ENCODE measurements at regions of chr15 and their contacts with region 1.

Region 1: DNA sequence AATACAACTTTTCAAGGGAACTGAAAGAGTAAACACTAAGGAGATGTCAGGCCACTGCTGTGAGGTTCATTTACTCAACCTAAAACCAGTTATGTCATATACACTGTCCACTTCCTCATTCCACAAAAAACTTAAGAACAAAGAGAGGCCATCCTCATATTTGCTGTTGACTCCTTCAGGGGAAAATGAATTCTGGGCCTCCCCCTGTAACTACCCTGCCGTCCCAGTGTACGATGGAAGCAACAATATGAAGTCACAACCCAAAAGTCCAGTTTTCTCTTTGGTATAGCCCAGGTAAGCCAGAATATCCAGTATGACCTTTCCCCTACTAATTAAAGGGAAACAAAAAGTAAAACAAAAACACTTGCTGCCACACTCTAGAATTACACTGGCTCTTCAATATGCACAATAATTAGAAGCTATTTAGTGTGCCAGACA is 16.2 kb downstream of the CEP152 start:
- DNase-seq: no peak
- ATAC-seq: peak in 3 of 4 donors; percentile 52 to 60 (median 58)
- H3K4me3 ChIP-seq: peak overlapping the region in 3 of 12 donors; percentile 2 to 26 (median 7)
- H3K27ac ChIP-seq: peak overlapping the region in 3 of 12 donors; percentile 6 to 88 (median 16)
- H3K4me1 ChIP-seq: peaks cover 0 to 20% (median 0%) of the 10 kb centered on the region in 12 donors
- H3K27me3 ChIP-seq: no peaks in the 10 kb centered on the region
- CTCF ChIP-seq: no peak
- POLR2A ChIP-seq: no peak

Region 2: GRCh38 chr15:48345516-48345915 is 449.2 kb before region 1 on chr15:
- intact Hi-C with region 1: no loop called
- DNase-seq: no peak
- ATAC-seq: no peak
- H3K4me3 ChIP-seq: no peak overlapping the region
- H3K27ac ChIP-seq: no peak overlapping the region
- H3K4me1 ChIP-seq: no peaks in the 10 kb centered on the region
- H3K27me3 ChIP-seq: no peaks in the 10 kb centered on the region
- CTCF ChIP-seq: no peak
- POLR2A ChIP-seq: no peak

Region 3: DNA sequence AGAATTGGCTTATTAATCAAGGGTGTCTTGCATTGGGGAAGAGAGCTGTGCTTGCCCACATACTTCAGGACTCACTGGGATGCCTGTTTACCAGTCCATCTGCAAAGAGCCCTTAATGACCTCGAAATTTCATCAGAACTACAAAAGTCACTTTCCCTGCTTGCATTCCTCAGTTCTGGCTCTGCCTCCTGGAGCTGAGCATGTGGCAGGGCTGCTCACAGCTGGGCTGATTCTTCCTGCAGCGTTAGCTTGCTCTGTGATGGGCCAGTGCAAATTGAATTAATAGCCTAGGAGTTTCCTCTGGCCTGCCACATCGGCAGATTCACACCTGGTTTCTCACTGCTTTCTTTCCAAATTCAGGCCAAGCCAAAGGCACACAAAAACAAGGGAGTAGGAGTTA is 354.6 kb before region 1 on chr15:
- intact Hi-C with region 1: loop called in 1 of 10 experiments (anchors 10 kb)
- DNase-seq: peak in 4 of 5 donors; percentile 17 to 58 (median 40)
- ATAC-seq: peak; percentile 78 to 90 (median 82)
- H3K4me3 ChIP-seq: no peak overlapping the region
- H3K27ac ChIP-seq: peak overlapping the region in 4 of 12 donors; percentile 6 to 30 (median 10)
- H3K4me1 ChIP-seq: peaks cover 0 to 14% (median 0%) of the 10 kb centered on the region in 12 donors
- H3K27me3 ChIP-seq: no peaks in the 10 kb centered on the region
- CTCF ChIP-seq: no peak
- POLR2A ChIP-seq: no peak

Region 4: DNA sequence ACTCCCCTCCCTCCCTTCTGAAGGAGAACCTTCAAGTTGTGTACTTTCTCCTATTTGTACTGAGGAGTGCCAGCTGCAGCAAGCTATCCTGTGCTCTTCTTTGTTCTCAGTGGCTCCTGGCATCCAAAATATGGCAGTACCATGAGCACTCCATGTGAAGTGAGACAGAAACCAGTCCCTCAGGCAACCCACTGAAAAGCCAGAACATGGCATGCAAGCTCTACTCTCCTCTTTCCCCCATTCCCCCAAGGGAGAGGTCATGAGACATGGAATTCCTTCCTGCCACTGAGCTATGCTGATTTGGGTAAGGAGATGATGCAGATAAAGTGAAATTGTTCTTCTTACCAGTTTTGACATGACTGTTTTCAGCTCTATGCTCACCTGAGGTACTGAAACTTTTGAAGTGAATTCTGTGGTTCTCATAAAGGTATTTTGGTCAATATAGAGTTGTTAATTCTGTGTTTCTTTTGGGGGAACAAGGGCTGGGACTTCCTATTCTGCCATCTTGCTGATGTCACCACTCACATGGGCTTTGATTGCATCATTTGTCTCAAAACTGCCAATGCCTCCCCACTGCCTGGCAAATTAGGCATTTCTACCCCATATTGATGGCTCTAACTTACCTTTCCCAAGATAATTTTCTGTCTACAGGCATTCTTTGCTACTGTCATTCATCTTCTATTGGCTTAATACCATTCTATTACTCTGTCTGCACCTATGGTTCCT is 39.0 kb after region 1 on chr15:
- intact Hi-C with region 1: no loop called
- DNase-seq: no peak
- ATAC-seq: no peak
- H3K4me3 ChIP-seq: no peak overlapping the region
- H3K27ac ChIP-seq: no peak overlapping the region
- H3K4me1 ChIP-seq: no peaks in the 10 kb centered on the region
- H3K27me3 ChIP-seq: no peaks in the 10 kb centered on the region
- CTCF ChIP-seq: no peak
- POLR2A ChIP-seq: no peak

Measured in heart left ventricle (tissue), 16 donors.